Mammary epithelial cell (primary cell): ENCODE measurements at regions of chr1 and their contacts with region 1.

Region 1: DNA sequence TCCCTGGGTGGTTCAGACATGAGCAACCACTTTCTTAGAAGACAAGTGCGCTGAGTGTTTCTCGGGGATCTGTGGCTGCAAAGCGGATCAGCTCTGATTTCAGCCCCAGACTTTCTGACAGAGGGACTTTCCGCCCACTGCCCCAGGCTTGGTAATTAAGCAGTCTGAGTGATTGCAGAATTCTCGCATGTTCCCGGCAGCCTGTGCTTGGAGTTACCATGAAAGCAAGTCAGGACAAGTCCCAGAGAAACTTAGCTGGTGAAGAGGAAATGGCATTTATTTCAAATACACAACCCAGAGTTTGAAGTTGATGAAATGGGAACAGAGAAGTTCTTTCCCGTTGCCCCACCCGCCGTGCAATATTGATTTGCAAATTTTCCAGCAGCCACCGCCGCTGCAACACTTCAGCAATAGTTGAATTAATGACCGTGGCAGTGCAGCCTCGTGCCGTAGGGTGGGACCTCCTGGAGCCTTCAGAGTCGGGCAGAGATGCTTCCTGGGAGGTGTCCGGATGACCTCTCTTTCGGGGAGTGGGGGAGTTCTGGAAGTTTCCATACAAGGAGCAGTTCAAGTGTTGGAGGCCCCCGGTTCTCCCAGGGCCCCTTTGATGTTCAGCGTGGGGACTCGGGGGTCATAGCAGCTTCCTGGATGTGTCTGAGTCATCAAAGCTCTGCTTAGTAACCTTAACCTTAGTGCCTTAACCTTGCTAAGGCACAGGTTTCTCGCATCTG is 134.7 kb downstream of the KAZN start:
- DNase-seq: peak; percentile 96
- H3K4me3 ChIP-seq: peak overlapping the region; percentile 1 to 26 (median 9)
- H3K27ac ChIP-seq: peak overlapping the region; percentile 98
- H3K4me1 ChIP-seq: peaks cover 27% of the 10 kb centered on the region
- H3K27me3 ChIP-seq: no peaks in the 10 kb centered on the region
- CTCF ChIP-seq: no peak

Region 2: DNA sequence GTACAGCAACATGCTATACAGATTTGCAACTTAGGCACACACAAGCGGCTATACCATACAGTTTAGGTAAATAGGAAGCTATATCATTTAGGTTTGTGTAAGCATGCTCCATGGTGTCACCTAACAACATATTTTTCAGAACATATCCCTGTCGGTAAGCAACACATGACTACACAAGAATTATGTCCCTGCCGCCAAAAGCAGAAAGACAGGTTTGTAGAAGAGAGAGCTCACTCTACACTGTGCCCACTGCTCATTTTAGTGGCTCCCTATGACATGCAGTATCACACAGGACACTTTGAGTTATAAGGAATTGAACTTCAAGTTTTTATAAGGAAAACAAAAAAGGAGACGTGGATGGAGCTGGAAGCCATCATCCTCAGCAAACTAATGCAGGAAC is 267.2 kb before region 1 on chr1:
- CTCF ChIA-PET with region 1: no interaction called
- dilution Hi-C with region 1: no loop called
- in situ Hi-C with region 1: no loop called
- intact Hi-C with region 1: no loop called
- DNase-seq: no peak
- H3K4me3 ChIP-seq: no peak overlapping the region
- H3K27ac ChIP-seq: no peak overlapping the region
- H3K4me1 ChIP-seq: no peaks in the 10 kb centered on the region
- H3K27me3 ChIP-seq: no peaks in the 10 kb centered on the region
- CTCF ChIP-seq: no peak

Region 3: DNA sequence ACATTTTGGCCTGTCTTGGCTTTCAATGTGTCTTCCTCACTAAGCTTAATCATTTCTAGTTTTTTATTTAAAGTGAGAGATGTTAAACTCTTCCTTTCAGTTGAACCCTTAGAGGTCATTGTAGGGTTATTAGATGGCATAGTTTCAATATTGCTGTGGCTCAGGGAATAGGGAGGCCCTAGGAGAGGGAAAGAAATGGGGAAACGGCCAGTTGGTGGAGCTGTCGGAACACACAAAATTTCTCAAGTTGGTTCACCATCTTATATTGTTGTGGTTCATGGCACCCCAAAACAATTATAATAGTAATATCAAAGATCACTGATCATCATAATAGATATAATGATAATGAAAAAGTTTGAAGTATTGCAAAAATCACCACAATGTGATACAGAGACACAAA is 166.2 kb before region 1 on chr1:
- CTCF ChIA-PET with region 1: no interaction called
- dilution Hi-C with region 1: no loop called
- in situ Hi-C with region 1: no loop called
- intact Hi-C with region 1: loop called (anchors 1 kb)
- DNase-seq: peak; percentile 12
- H3K4me3 ChIP-seq: no peak overlapping the region
- H3K27ac ChIP-seq: no peak overlapping the region
- H3K4me1 ChIP-seq: no peaks in the 10 kb centered on the region
- H3K27me3 ChIP-seq: no peaks in the 10 kb centered on the region
- CTCF ChIP-seq: peak; percentile 25 to 45

Region 4: DNA sequence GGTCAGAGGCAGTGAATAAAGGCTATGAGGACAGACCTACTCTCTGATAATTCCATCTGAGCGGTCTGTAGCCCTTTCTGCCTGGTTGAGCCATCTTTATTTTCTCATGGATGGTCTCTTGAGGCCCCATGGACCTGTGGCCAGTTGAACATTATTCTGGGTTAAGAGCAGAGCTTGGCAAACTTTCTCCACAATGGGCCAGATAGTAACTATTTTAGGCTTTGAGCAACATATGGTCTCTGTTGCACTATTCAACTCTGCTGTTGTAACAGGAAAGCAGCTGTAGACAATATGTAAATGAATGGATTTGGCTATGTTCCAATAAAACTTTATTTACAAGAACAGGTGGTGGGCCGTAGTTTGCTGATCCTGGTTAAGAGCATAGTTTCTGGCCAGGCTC is 72.0 kb before region 1 on chr1:
- CTCF ChIA-PET with region 1: no interaction called
- dilution Hi-C with region 1: no loop called
- in situ Hi-C with region 1: no loop called
- intact Hi-C with region 1: loop called (anchors 2 kb)
- DNase-seq: no peak
- H3K4me3 ChIP-seq: no peak overlapping the region
- H3K27ac ChIP-seq: no peak overlapping the region
- H3K4me1 ChIP-seq: no peaks in the 10 kb centered on the region
- H3K27me3 ChIP-seq: no peaks in the 10 kb centered on the region
- CTCF ChIP-seq: no peak

Region 5: DNA sequence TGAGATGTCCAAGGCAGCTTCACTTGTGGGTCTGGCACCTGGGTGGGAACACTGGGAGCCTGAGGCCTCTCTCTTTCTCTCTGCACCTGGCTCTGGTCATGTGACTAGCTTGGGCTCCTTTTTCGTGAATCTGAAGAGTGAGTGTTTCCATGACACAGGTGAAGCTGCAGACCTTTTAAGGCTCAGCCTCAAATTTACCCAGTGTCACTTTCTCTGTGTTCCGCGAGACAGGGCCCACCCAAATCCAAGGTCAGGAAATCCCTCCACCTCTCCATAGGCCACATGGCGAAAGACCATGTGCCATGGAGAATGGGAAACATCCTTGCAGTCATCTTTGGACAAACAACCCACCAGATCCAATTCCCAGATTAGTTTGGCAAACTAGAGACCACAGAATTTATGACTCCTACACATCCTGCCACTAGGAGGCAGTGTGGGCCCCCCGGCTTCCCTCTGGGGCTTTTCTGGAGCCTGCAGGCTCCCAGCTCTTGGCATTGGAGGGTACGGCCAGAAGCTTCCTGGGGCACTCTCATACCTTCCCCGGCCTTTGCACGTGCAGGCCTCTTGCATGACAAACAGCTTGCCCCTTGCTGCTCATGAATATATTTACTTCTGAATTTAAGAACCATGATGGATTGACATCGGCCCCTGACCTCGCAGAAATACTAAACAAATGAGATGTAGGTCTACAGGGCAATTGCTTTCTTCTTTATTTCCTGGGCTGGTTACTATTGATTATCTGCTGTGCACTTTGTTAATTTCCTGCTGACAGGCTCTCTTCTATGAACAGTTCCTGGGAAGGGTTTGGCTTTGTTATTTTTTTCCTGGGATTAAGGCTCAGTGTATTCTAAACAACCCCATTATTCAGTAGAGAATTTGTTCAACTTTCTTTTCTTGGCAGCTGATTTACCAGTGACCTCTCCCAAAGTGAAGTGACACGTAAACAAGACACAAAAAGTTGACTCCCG is 46.0 kb after region 1 on chr1:
- CTCF ChIA-PET with region 1: no interaction called
- dilution Hi-C with region 1: no loop called
- in situ Hi-C with region 1: no loop called
- intact Hi-C with region 1: loop called (anchors 2 kb)
- DNase-seq: no peak
- H3K4me3 ChIP-seq: no peak overlapping the region
- H3K27ac ChIP-seq: no peak overlapping the region
- H3K4me1 ChIP-seq: no peaks in the 10 kb centered on the region
- H3K27me3 ChIP-seq: no peaks in the 10 kb centered on the region
- CTCF ChIP-seq: peak; percentile 72 to 78

Region 6: DNA sequence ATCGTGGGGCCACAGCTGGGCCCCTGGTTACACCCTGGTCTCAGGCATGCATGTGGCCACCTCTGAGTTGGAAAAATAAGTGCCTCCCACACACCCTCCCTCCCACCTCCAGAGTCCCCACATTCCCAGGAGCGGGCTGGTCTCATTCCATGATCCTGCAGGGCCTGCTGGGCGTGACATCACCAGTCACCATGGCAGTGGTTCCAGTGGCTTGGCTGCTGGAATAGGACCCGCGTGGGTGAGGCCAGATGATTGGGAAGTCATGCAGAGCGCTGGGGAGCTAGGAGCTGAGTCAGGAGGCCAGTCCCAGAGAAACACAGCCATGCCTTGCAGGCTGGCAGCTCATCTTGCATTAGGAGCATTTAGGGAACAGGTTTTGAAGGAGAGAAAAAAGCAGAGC is 294.9 kb after region 1 on chr1:
- CTCF ChIA-PET with region 1: no interaction called
- dilution Hi-C with region 1: no loop called
- in situ Hi-C with region 1: no loop called
- intact Hi-C with region 1: loop called (anchors 1 kb)
- DNase-seq: peak; percentile 61
- H3K4me3 ChIP-seq: no peak overlapping the region
- H3K27ac ChIP-seq: peak overlapping the region; percentile 41
- H3K4me1 ChIP-seq: peaks cover 30% of the 10 kb centered on the region
- H3K27me3 ChIP-seq: no peaks in the 10 kb centered on the region
- CTCF ChIP-seq: no peak